Heart right ventricle (tissue), 16 donors: ENCODE measurements at regions of chr3 and their contacts with region 1.

Region 1: DNA sequence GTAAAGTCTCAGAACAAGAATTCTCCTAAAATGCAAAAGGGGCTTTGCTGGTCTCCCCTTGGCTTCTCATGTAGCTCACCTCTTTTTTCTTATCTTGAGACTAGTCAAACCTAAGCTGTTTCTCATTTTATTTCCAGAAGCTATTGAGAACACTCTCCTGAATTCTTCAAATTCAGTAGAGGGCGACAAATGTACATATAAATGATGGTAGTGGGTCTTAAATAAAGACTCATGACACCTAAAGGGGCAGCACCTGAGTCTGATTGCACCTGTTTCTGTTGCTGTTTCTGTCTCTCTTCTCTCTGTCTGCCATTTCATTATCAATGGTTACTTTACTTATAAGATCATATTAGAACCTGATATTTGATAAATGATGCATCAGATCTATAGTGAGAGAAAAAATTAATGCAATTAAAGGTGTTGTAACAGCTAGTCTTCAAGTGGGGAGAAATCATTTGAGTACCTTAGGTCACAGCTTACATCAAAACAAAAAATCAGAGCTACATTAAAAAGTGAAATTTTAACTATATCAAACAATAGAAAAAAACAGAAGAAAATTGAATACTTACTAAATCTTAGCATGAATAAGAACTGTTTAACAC is 7.0 kb downstream of the ADIPOQ start:
- DNase-seq: no peak
- ATAC-seq: peak in 6 of 8 donors; percentile 49 to 64 (median 60)
- H3K4me3 ChIP-seq: no peak overlapping the region
- H3K27ac ChIP-seq: no peak overlapping the region
- H3K4me1 ChIP-seq: no peaks in the 10 kb centered on the region
- H3K27me3 ChIP-seq: peaks cover 0 to 10% (median 3%) of the 10 kb centered on the region in 7 donors
- CTCF ChIP-seq: peak in 8 of 9 donors; percentile 20 to 78 (median 66)

Region 2: DNA sequence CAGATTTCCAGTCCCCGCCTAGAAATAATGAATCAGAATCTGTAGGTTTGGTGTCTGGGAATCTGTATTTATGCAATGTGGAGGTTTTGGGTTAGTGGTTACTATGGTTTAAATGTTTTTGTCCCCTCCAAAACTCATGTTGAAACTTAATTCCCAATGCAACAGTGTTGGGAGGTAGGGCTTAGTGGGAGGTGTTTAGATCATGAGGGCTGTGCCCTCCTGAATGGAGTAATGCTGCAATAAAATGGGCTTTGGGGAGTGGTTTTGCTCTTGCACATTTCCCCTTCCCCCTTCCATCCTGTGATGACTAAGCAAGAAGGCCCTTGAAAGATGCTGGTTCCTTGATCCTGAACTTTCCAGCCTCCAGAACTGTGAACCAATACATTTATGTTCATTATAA is 34.0 kb before region 1 on chr3:
- intact Hi-C with region 1: no loop called
- DNase-seq: no peak
- ATAC-seq: no peak
- H3K4me3 ChIP-seq: no peak overlapping the region
- H3K27ac ChIP-seq: no peak overlapping the region
- H3K4me1 ChIP-seq: peaks cover 0 to 6% (median 0%) of the 10 kb centered on the region in 9 donors
- H3K27me3 ChIP-seq: peaks cover 0 to 19% (median 6%) of the 10 kb centered on the region in 7 donors
- CTCF ChIP-seq: no peak

Region 3: GRCh38 chr3:186871403-186871924 is 22.0 kb after region 1 on chr3:
- intact Hi-C with region 1: no loop called
- DNase-seq: no peak
- ATAC-seq: peak in 7 of 8 donors; percentile 38 to 88 (median 72)
- H3K4me3 ChIP-seq: no peak overlapping the region
- H3K27ac ChIP-seq: peak overlapping the region in 4 of 10 donors; percentile 32 to 70 (median 54)
- H3K4me1 ChIP-seq: peaks cover 0 to 32% (median 15%) of the 10 kb centered on the region in 9 donors
- H3K27me3 ChIP-seq: no peaks in the 10 kb centered on the region
- CTCF ChIP-seq: no peak

Region 4: GRCh38 chr3:186921578-186921977 is 72.1 kb after region 1 on chr3:
- intact Hi-C with region 1: loop called in 3 of 10 experiments (anchors 5 to 10 kb)
- DNase-seq: no peak
- ATAC-seq: no peak
- H3K4me3 ChIP-seq: no peak overlapping the region
- H3K27ac ChIP-seq: no peak overlapping the region
- H3K4me1 ChIP-seq: peaks cover 0 to 7% (median 0%) of the 10 kb centered on the region in 9 donors
- H3K27me3 ChIP-seq: no peaks in the 10 kb centered on the region
- CTCF ChIP-seq: no peak

Region 5: DNA sequence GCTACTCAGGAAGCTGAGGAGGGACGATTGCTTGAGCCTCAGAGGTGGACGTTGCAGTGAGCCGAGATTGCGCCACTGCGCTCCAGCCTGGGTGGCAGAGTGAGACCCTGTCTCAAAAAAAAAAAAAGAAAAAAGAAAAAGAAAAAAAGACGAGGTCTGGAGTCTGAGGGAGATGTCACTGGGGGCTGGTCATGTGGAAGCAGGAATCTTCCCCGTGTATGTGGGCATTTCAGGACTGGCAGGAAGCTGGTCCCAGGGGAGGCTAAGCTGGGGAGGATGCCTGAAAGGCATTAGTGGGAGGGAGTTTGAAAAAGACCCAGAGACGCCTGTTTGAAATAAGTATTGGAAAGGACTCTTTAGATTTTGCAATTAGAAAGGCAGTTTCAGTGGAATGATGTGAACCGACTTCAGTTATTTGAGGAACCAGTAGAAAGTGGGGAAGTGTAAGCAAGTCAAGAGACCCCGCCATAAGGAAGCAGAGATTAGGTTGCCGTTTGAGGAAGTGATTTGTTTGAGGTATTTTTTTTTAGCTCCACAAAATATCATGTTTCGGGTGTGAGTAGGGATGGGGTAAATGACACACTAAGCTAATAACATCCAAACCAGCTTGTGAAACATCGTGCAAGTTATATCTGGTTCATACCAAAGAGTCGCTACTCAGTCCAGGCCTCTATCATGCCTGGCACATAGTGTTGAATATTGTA is 136.3 kb after region 1 on chr3:
- intact Hi-C with region 1: loop called in 1 of 10 experiments (anchors 10 kb)
- DNase-seq: peak in 1 of 2 donors; percentile 25
- ATAC-seq: peak in 7 of 8 donors; percentile 7 to 55 (median 39)
- H3K4me3 ChIP-seq: peak overlapping the region in 1 of 10 donors; percentile 18
- H3K27ac ChIP-seq: peak overlapping the region in 8 of 10 donors; percentile 11 to 77 (median 36)
- H3K4me1 ChIP-seq: peaks cover 2 to 59% (median 54%) of the 10 kb centered on the region in 9 donors
- H3K27me3 ChIP-seq: no peaks in the 10 kb centered on the region
- CTCF ChIP-seq: no peak